MCF 10A (cell line): ENCODE measurements at regions of chr1 and their contacts with region 1.

Region 1: GRCh38 chr1:236795035-236795756 is at the start of gene MTR:
- DNase-seq: peak; percentile 100
- H3K4me3 Mint-ChIP-seq: peak within 1 kb of the TSS; percentile 93
- H3K27ac Mint-ChIP-seq: peak within 1 kb of the TSS; percentile 88
- H3K4me1 Mint-ChIP-seq: peaks cover 34% of the 10 kb centered on the region
- H3K27me3 Mint-ChIP-seq: peaks cover 15% of the 10 kb centered on the region
- CTCF ChIP-seq: no peak
- total RNA-seq, gene MTR: 54.6 and 59.1 TPM in 2 replicates

Region 2: GRCh38 chr1:236523701-236524141 is 271.5 kb before region 1 on chr1 and contains the start of gene LGALS8:
- CTCF ChIA-PET with region 1: no interaction called
- POLR2A ChIA-PET with region 1: interaction called, 10 read pairs
- intact Hi-C with region 1: no loop called
- DNase-seq: peak; percentile 92
- H3K4me3 Mint-ChIP-seq: peak within 1 kb of the TSS; percentile 98
- H3K27ac Mint-ChIP-seq: peak within 1 kb of the TSS; percentile 97
- H3K4me1 Mint-ChIP-seq: peaks cover 6% of the 10 kb centered on the region
- H3K27me3 Mint-ChIP-seq: no peaks in the 10 kb centered on the region
- CTCF ChIP-seq: no peak
- total RNA-seq, gene LGALS8: 73.2 and 99.7 TPM in 2 replicates

Region 3: GRCh38 chr1:236615399-236616148 is 179.6 kb before region 1 on chr1:
- CTCF ChIA-PET with region 1: interaction called, 3 read pairs
- POLR2A ChIA-PET with region 1: interaction called, 11 read pairs
- intact Hi-C with region 1: no loop called
- DNase-seq: no peak
- H3K4me3 Mint-ChIP-seq: no peak overlapping the region
- H3K27ac Mint-ChIP-seq: no peak overlapping the region
- H3K4me1 Mint-ChIP-seq: no peaks in the 10 kb centered on the region
- H3K27me3 Mint-ChIP-seq: peaks cover 43% of the 10 kb centered on the region
- CTCF ChIP-seq: no peak

Region 4: GRCh38 chr1:236808564-236809130 is 13.5 kb after region 1 on chr1:
- CTCF ChIA-PET with region 1: interaction called, 7 read pairs
- POLR2A ChIA-PET with region 1: interaction called, 81 read pairs
- intact Hi-C with region 1: no loop called
- DNase-seq: no peak
- H3K4me3 Mint-ChIP-seq: no peak overlapping the region
- H3K27ac Mint-ChIP-seq: no peak overlapping the region
- H3K4me1 Mint-ChIP-seq: no peaks in the 10 kb centered on the region
- H3K27me3 Mint-ChIP-seq: no peaks in the 10 kb centered on the region
- CTCF ChIP-seq: no peak